Tibial artery (tissue), 4 donors: ENCODE measurements at regions of chr9 and their contacts with region 1.

Region 1: GRCh38 chr9:135544981-135545635 is 818 bp upstream of the OBP2A start:
- DNase-seq: peak in 1 of 2 donors; percentile 44
- H3K4me3 ChIP-seq: no peak overlapping the region
- H3K27ac ChIP-seq: no peak overlapping the region
- H3K4me1 ChIP-seq: no peaks in the 10 kb centered on the region
- H3K27me3 ChIP-seq: peaks cover 0 to 32% of the 10 kb centered on the region in 2 donors
- CTCF ChIP-seq: no peak

Region 2: GRCh38 chr9:135050072-135050990 is 494.8 kb before region 1 on chr9:
- intact Hi-C with region 1: loop called (anchors 5 kb)
- DNase-seq: peak in 1 of 2 donors; percentile 50
- H3K4me3 ChIP-seq: no peak overlapping the region
- H3K27ac ChIP-seq: no peak overlapping the region
- H3K4me1 ChIP-seq: no peaks in the 10 kb centered on the region
- H3K27me3 ChIP-seq: peaks cover 0 to 86% of the 10 kb centered on the region in 2 donors
- CTCF ChIP-seq: no peak

Region 3: GRCh38 chr9:135516132-135516860 is 28.8 kb before region 1 on chr9:
- intact Hi-C with region 1: no loop called
- DNase-seq: peak in 1 of 2 donors; percentile 43
- H3K4me3 ChIP-seq: no peak overlapping the region
- H3K27ac ChIP-seq: no peak overlapping the region
- H3K4me1 ChIP-seq: no peaks in the 10 kb centered on the region
- H3K27me3 ChIP-seq: peaks cover 0 to 11% of the 10 kb centered on the region in 2 donors
- CTCF ChIP-seq: no peak